ENCODE measurements at regions of chr16 and their contacts with region 1.

Region 1: GRCh38 chr16:46853713-46854443 is 22.9 kb upstream of the C16orf87 start:
- DNase-seq: peak; percentile 70 to 84 (median 77)
- ATAC-seq: peak in 3 of 4 donors; percentile 79 to 89 (median 81)
- H3K4me3 ChIP-seq: no peak overlapping the region
- H3K27ac ChIP-seq: no peak overlapping the region
- H3K4me1 ChIP-seq: peaks cover 0 to 4% (median 0%) of the 10 kb centered on the region in 12 donors
- H3K27me3 ChIP-seq: no peaks in the 10 kb centered on the region
- CTCF ChIP-seq: peak; percentile 69 to 87 (median 82)
- POLR2A ChIP-seq: no peak

Region 2: DNA sequence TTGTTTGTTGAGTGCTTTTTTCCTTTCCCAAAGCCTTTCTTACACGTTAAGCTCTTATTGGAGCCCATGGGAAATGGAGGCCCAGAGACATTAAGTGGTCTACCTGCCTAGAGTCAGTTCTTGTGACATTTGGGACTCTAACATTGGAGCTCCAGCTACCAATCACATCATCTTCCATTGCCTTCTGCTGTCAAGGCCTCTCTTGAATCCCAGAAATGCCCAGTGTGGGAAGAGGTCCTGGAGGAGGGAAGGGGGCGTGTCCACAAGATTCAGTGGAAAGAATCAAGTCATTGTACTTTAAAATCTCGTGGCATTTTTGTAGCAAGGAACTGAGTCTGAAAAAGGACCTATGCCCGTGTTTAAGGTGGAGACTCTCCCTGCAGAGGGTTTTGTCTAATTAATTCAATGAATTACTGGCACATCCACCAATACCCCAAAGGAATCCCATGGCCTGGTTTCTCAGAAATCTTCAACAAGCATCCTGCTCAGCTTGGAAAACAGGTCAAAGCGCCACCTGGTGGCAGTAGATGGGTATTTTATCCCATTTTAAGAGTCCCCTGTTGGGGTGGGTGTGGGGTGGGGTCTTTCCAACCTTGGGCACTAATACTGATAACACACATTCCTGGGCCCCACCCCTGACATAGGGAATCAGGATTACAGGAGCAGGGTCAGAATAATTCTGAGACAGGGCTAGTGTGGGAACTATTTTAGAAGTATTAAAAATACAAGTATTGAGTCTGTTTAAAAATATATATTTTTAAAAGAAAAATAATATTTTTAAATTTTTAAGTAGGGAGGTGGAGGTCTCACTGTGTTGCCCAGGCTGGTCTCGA is 54.9 kb after region 1 on chr16:
- intact Hi-C with region 1: loop called (anchors 1 to 2 kb)
- DNase-seq: peak in 2 of 5 donors; percentile 34 to 36
- ATAC-seq: peak in 2 of 4 donors; percentile 53 to 65
- H3K4me3 ChIP-seq: no peak overlapping the region
- H3K27ac ChIP-seq: no peak overlapping the region
- H3K4me1 ChIP-seq: peaks cover 0 to 8% (median 0%) of the 10 kb centered on the region in 12 donors
- H3K27me3 ChIP-seq: no peaks in the 10 kb centered on the region
- CTCF ChIP-seq: peak; percentile 65 to 81 (median 77)
- POLR2A ChIP-seq: no peak

Region 3: GRCh38 chr16:46929378-46930332 is 75.8 kb after region 1 on chr16:
- intact Hi-C with region 1: loop called in 2 of 10 experiments (anchors 5 kb)
- DNase-seq: peak; percentile 40 to 83 (median 57)
- ATAC-seq: peak; percentile 5 to 77 (median 73)
- H3K4me3 ChIP-seq: no peak overlapping the region
- H3K27ac ChIP-seq: no peak overlapping the region
- H3K4me1 ChIP-seq: peaks cover 0 to 9% (median 0%) of the 10 kb centered on the region in 12 donors
- H3K27me3 ChIP-seq: no peaks in the 10 kb centered on the region
- CTCF ChIP-seq: peak; percentile 70 to 92 (median 84)
- POLR2A ChIP-seq: no peak

Region 4: DNA sequence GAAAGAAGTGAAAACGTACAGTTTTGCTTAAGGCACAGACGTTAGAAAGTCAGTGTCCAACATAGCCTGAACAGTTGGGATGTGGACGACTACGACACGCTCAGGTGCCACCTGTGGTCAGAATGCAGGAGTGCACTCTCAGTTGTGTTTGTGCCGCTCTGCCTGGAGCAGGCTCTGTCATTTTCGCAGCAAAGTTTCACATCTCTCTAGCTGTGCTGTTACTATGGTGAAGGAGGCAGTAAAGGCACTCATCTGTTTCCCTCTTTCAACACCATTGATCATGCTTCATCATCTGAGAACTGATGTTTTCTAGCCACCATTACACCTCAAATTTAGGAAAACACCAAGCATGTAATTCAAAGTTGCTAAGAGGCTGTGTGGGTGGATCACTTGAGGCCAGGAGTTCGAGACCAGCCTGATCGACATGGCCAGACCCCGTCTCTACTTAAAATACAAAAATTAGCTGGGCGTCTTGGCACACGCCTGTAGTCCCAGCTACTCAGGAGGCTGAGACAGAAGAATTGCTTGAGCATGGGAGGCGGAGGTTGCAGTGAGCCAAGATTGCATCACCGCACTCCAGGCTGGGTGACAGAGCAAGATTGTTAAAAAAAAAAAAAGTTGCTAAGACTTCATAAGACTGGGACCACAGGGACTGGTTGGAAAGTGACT is 164.5 kb after region 1 on chr16:
- intact Hi-C with region 1: loop called in 1 of 10 experiments (anchors 10 kb)
- DNase-seq: peak in 1 of 5 donors; percentile 12
- ATAC-seq: peak; percentile 42 to 77 (median 74)
- H3K4me3 ChIP-seq: no peak overlapping the region
- H3K27ac ChIP-seq: no peak overlapping the region
- H3K4me1 ChIP-seq: peaks cover 0 to 16% (median 0%) of the 10 kb centered on the region in 12 donors
- H3K27me3 ChIP-seq: no peaks in the 10 kb centered on the region
- CTCF ChIP-seq: peak in 11 of 12 donors; percentile 11 to 47 (median 33)
- POLR2A ChIP-seq: no peak

Measured in heart left ventricle (tissue), 16 donors.